ENCODE measurements at regions of chr1 and their contacts with region 1.

Region 1: GRCh38 chr1:153796791-153797659 is 21.8 kb downstream of the SLC27A3 start:
- DNase-seq: peak; percentile 91
- CTCF ChIP-seq: peak; percentile 88

Region 2: GRCh38 chr1:153984123-153984894 is 187.3 kb after region 1 on chr1:
- in situ Hi-C with region 1: loop called (anchors 5 kb)
- DNase-seq: no peak
- CTCF ChIP-seq: no peak

Region 3: GRCh38 chr1:154419620-154420571 is 622.9 kb after region 1 on chr1:
- in situ Hi-C with region 1: no loop called
- DNase-seq: no peak
- CTCF ChIP-seq: no peak

Region 4: GRCh38 chr1:154483941-154484803 is 687.1 kb after region 1 on chr1:
- in situ Hi-C with region 1: no loop called
- DNase-seq: no peak
- CTCF ChIP-seq: no peak